Activated CD4-positive, alpha-beta T cell treated with anti-CD3 and anti-CD28 coated beads for 36 hours (primary cell): ENCODE measurements at regions of chrX and their contacts with region 1.

Region 1: DNA sequence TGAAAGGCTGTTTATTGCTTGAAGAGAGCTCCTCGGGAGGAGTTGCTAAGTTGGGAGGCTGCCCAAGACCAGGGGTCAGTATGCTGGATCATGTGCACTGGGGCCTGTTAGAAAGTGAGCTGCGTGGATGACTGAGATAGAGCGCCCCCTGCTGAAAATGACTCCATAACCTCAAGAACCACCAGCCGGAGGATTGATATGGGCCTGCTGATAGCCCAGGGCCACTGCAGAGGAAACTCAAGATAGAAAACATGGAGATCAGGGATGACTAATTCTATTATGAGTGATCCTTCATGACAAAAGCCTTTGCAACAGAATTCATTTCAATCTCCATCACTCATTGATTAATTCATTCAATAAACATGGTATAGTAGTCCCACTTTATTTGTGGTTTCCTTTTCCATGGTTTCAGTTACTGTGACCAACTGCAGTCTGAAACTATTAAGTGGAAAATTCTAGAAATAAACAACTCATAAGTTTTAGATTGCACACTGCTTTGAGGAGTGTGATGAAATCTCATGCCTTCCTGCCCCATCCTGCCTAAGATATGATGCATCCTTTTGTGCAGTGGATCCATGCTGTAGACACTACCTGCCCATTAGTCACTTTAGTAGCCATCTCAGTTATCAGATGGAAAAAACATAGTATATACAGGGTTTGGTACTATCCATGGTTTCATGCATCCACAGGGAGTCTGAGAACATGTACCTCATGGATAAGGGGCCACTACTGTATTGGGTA is 126.7 kb upstream of the MBNL3 start:
- DNase-seq: peak; percentile 65
- ATAC-seq: peak; percentile 78
- H3K4me3 Mint-ChIP-seq: no peak overlapping the region
- H3K27ac Mint-ChIP-seq: no peak overlapping the region
- H3K4me1 Mint-ChIP-seq: no peaks in the 10 kb centered on the region
- H3K27me3 Mint-ChIP-seq: no peaks in the 10 kb centered on the region

Region 2: GRCh38 chrX:131830400-131831184 is 785.0 kb before region 1 on chrX:
- CTCF ChIA-PET with region 1: no interaction called
- POLR2A ChIA-PET with region 1: no interaction called
- intact Hi-C with region 1: loop called (anchors 5 kb)
- DNase-seq: peak; percentile 76
- ATAC-seq: peak; percentile 89
- H3K4me3 Mint-ChIP-seq: peak overlapping the region; percentile 80
- H3K27ac Mint-ChIP-seq: peak overlapping the region; percentile 86
- H3K4me1 Mint-ChIP-seq: peaks cover 25% of the 10 kb centered on the region
- H3K27me3 Mint-ChIP-seq: no peaks in the 10 kb centered on the region

Region 3: DNA sequence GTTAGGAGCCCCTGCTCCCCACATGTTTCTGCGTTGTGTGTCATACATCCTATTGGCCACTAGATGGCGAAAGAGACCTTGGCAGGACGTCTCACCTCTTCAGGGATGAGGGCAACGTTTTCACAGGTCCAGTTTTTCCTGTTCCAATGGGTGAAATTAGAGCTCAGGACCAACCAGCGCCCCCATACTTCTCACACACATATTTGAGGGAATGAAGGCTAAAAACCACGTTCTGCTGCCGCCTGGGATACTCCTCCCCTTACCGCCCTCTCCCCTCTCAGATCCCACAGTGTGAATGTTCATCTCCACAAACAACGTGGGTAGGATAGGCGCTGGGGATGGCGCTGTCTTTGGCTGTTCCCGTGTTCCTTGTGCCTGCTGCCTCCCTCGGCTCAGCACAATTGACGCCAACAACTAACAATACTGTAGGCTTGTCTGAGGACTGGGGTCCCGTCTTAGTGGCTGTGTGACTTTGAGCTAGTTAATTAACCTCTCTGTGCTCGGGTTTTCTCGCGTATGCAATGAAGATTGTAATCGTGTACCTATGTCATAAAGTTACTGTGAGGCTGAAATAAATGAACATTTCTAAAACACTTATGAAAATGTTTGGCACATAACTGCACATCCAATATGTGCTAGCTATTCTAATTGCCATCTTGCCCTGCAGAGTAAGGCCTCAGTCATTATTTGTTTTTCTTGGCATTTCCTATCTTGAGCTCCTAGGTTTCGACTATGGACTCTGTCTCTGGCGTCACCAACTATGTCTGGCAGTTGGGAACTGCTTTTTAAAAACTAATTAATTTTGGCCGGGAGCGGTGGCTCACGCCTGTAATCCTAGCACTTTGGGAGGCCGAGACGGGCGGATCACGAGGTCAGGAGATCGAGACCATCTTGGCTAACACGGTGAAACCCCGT is 773.8 kb before region 1 on chrX:
- CTCF ChIA-PET with region 1: interaction called, 4 read pairs
- POLR2A ChIA-PET with region 1: no interaction called
- intact Hi-C with region 1: loop called in 1 of 2 experiments (anchors 1 kb)
- DNase-seq: peak; percentile 36
- ATAC-seq: peak; percentile 75
- H3K4me3 Mint-ChIP-seq: no peak overlapping the region
- H3K27ac Mint-ChIP-seq: no peak overlapping the region
- H3K4me1 Mint-ChIP-seq: peaks cover 6% of the 10 kb centered on the region
- H3K27me3 Mint-ChIP-seq: no peaks in the 10 kb centered on the region

Region 4: DNA sequence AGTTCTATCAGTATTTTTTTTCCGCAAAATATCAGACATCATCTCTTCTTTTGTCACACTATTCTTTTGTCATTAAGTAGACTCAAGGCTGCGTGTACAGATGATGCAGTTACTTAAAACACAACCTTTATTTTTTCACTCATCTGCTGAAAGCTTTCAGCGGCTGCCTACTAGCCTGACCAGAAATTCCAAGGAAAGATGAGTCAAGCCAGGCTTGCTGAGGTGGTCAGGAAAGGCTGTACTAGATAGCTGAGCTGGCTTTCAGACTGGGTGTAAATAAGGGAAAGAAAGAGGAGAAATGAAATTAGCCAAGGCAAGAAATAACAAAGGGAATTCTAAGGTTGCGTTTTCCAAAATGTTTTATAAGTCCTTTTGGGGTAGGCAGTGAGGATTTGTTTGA is 574.5 kb before region 1 on chrX:
- CTCF ChIA-PET with region 1: no interaction called
- POLR2A ChIA-PET with region 1: no interaction called
- intact Hi-C with region 1: no loop called
- DNase-seq: no peak
- ATAC-seq: no peak
- H3K4me3 Mint-ChIP-seq: no peak overlapping the region
- H3K27ac Mint-ChIP-seq: peak overlapping the region; percentile 37
- H3K4me1 Mint-ChIP-seq: peaks cover 54% of the 10 kb centered on the region
- H3K27me3 Mint-ChIP-seq: no peaks in the 10 kb centered on the region

Region 5: GRCh38 chrX:132092439-132093065 is 523.0 kb before region 1 on chrX:
- CTCF ChIA-PET with region 1: interaction called, 3 read pairs
- POLR2A ChIA-PET with region 1: no interaction called
- intact Hi-C with region 1: loop called in 1 of 2 experiments (anchors 1 kb)
- DNase-seq: peak; percentile 71
- ATAC-seq: peak; percentile 86
- H3K4me3 Mint-ChIP-seq: no peak overlapping the region
- H3K27ac Mint-ChIP-seq: no peak overlapping the region
- H3K4me1 Mint-ChIP-seq: peaks cover 10% of the 10 kb centered on the region
- H3K27me3 Mint-ChIP-seq: peaks cover 2% of the 10 kb centered on the region

Region 6: GRCh38 chrX:132226169-132226568 is 389.4 kb before region 1 on chrX:
- CTCF ChIA-PET with region 1: interaction called, 7 read pairs
- POLR2A ChIA-PET with region 1: no interaction called
- intact Hi-C with region 1: loop called (anchors 1 kb)
- DNase-seq: no peak
- ATAC-seq: no peak
- H3K4me3 Mint-ChIP-seq: no peak overlapping the region
- H3K27ac Mint-ChIP-seq: no peak overlapping the region
- H3K4me1 Mint-ChIP-seq: peaks cover 21% of the 10 kb centered on the region
- H3K27me3 Mint-ChIP-seq: no peaks in the 10 kb centered on the region

Region 7: DNA sequence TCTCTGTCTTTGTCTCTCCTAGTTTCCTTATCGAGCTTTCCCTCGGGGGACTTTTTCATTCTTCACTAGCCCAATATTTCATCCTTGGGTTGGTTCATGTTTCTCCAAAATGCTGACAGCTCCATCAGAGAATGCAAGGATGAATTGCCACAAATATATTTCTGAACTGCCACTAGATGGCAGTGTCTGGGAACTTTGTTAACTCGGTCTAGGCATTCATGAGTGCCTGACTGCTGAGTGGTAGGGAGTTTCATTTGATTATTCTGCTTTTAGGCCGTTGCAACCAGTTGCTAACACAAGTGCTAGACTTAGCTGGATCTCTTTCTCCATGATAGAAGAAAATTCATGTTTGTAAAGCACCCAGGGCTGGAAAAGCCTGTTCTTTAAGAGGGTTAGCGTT is 322.8 kb before region 1 on chrX:
- CTCF ChIA-PET with region 1: interaction called, 38 read pairs
- POLR2A ChIA-PET with region 1: no interaction called
- intact Hi-C with region 1: loop called (anchors 1 kb)
- DNase-seq: peak; percentile 28
- ATAC-seq: peak; percentile 39
- H3K4me3 Mint-ChIP-seq: no peak overlapping the region
- H3K27ac Mint-ChIP-seq: no peak overlapping the region
- H3K4me1 Mint-ChIP-seq: no peaks in the 10 kb centered on the region
- H3K27me3 Mint-ChIP-seq: no peaks in the 10 kb centered on the region

Region 8: DNA sequence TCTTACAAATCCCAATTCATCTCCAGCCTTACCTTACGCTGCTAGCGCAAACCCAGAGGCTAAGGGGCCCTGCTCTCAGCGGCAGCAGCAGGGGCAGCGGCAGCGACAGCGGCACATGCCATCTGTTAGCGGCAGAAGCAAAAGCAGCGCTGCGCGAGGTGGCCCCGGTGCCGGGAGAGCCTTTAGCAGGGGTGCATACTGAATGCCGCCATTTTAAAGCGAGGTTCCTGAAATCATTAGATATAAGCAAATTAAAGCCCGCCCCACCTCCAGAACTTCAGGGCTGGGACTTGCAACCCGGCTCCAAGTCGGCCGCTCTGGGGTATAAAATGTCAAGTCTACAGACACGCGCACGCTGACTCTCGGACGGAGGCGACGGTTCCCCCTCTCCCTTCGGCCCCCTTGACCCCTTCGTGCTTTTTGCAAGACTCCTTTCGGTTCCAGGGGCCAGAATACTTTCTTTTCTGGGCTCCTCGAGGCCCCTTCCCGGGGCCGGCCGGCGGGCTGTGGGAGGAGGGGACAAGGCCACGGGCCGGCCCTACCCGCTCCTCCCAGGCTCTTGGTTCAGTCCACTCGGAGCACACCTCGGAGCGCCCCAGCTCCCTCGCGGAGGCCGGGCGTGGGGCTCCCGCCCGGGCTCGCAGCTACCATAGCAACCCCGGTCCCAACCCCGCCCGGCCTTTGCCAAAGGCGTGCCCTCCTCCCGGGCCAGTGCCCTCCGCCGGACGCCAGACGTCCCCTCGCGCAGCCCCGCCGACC is 126.6 kb before region 1 on chrX and contains the start of gene MBNL3:
- CTCF ChIA-PET with region 1: interaction called, 7 read pairs
- POLR2A ChIA-PET with region 1: no interaction called
- intact Hi-C with region 1: loop called (anchors 5 to 10 kb)
- DNase-seq: peak; percentile 76
- ATAC-seq: peak; percentile 67
- H3K4me3 Mint-ChIP-seq: peak within 1 kb of the TSS; percentile 86
- H3K27ac Mint-ChIP-seq: peak within 1 kb of the TSS; percentile 98
- H3K4me1 Mint-ChIP-seq: peaks cover 42% of the 10 kb centered on the region
- H3K27me3 Mint-ChIP-seq: no peaks in the 10 kb centered on the region
- total RNA-seq, gene MBNL3: 15.3 to 19.3 TPM

Region 9: DNA sequence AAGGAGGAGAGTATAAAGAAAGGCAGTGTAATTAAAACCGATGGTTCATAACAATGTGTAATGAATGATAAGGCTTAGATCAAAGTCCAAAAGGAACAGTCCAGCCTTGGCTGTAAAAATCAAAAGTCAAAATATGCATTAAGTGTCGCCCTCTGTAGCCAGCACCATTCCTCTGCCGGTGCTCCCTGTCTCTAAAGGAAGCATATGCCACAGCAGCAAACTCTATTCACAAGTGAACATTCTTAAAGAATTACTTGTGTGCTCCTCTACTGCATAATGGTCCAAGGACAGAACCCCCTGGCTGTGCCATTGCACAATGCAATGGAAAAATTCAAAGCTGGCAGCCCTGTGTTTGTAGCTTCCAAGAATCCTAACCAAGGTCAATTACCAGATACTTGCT is 110.4 kb before region 1 on chrX:
- CTCF ChIA-PET with region 1: no interaction called
- POLR2A ChIA-PET with region 1: no interaction called
- intact Hi-C with region 1: no loop called
- DNase-seq: no peak
- ATAC-seq: no peak
- H3K4me3 Mint-ChIP-seq: no peak overlapping the region
- H3K27ac Mint-ChIP-seq: no peak overlapping the region
- H3K4me1 Mint-ChIP-seq: no peaks in the 10 kb centered on the region
- H3K27me3 Mint-ChIP-seq: no peaks in the 10 kb centered on the region